PC-9 (cell line): ENCODE measurements at regions of chr3 and their contacts with region 1.

Region 1: DNA sequence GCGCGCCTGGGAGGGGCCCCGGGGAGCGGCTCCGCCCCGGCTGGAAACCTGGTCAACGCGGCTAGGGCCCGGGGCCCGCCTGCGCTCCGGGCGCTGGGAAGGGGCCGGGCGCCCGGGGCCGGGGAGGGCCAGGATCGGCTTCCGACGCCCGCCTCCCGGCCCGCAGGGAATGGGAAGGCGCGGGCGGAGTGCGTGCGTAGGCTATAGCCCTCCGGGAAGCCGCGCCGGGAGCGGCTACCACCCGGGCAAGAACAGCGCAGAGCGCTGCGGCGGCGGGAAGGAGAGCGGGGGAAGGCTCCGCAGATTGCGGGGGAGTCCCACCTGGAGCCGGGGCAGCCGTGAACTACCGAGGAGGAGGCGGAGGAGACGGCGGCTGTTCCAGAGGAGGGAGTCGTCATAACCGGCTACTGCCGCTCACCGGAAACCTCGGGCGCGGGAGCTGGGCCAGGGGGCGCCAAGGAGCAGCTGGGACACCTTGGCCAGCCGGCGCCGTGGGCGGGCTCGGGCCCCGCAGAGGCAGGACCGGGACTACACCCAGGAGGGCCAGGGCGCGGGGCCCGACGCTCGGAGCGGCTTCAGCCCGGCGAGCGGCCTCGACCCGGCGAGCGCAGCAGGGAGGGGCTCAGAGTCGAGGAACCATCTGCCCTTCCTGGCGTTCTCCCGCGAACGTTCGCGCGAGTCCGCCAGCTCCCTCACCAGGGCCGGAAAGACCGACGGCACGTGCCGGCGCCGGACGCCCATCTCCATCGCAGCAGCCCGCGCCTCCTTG is at the start of gene EOGT:
- DNase-seq: peak; percentile 51 to 87
- H3K4me3 ChIP-seq: peak within 1 kb of the TSS; percentile 71
- H3K27ac ChIP-seq: 0 out of 2 replicates have a peak within 1 kb of the TSS, but pooled peaks have one; percentile 26
- H3K4me1 ChIP-seq: peaks cover 11% of the 10 kb centered on the region; the same call in 1 of the 2 replicates
- H3K27me3 ChIP-seq: no peaks in the 10 kb centered on the region
- CTCF ChIP-seq: peak; percentile 54; the same call in 1 of the 2 replicates
- total RNA-seq, gene EOGT: 7.4 and 11.0 TPM in 2 replicates

Region 2: GRCh38 chr3:68751888-68752287 is 261.5 kb before region 1 on chr3:
- CTCF ChIA-PET with region 1: no interaction called
- POLR2A ChIA-PET with region 1: no interaction called
- intact Hi-C with region 1: no loop called
- DNase-seq: no peak
- H3K4me3 ChIP-seq: no peak overlapping the region
- H3K27ac ChIP-seq: no peak overlapping the region
- H3K4me1 ChIP-seq: no peaks in the 10 kb centered on the region
- H3K27me3 ChIP-seq: no peaks in the 10 kb centered on the region
- CTCF ChIP-seq: no peak

Region 3: DNA sequence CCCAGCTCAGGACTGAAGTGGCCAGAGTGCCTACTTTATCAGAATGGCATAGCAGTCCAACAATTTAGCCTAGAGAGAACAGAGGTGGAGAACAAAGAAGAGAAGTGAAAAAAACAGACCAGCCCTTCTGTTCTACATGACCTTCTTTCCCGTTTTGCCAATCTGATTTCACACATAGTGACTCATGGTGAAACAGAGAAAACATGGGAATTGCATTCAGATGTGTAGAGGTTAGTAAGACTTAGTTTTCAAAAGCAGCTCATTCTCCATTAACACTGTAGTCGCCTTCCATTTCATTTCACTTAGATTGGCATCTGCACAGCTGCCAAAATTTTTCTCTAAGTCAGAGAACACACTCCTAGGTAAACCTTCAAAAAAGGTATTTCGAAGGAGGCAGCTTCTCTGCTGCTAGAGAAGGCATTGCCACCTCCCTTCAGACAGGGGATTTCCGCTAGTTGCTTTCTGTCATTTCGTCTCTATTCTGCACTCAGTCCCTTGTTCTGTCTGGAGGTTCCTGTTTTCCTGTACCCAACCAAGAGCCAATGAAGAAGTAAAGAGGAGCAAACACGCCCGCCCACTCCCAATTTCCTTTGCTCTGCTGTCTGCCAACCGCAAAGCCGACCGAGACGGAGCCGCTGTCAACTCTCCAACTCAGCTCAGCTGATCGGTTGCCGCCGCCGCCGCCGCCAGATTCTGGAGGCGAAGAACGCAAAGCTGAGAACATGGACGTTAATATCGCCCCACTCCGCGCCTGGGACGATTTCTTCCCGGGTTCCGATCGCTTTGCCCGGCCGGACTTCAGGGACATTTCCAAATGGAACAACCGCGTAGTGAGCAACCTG is 71.1 kb after region 1 on chr3 and contains the start of gene ARL6IP5:
- CTCF ChIA-PET with region 1: no interaction called
- POLR2A ChIA-PET with region 1: no interaction called
- intact Hi-C with region 1: no loop called
- DNase-seq: peak; percentile 74 to 81
- H3K4me3 ChIP-seq: peak within 1 kb of the TSS; percentile 74
- H3K27ac ChIP-seq: peak within 1 kb of the TSS; percentile 94
- H3K4me1 ChIP-seq: peaks cover 74% of the 10 kb centered on the region
- H3K27me3 ChIP-seq: no peaks in the 10 kb centered on the region
- CTCF ChIP-seq: no peak
- total RNA-seq, gene ARL6IP5: 35.6 and 45.7 TPM in 2 replicates

Region 4: DNA sequence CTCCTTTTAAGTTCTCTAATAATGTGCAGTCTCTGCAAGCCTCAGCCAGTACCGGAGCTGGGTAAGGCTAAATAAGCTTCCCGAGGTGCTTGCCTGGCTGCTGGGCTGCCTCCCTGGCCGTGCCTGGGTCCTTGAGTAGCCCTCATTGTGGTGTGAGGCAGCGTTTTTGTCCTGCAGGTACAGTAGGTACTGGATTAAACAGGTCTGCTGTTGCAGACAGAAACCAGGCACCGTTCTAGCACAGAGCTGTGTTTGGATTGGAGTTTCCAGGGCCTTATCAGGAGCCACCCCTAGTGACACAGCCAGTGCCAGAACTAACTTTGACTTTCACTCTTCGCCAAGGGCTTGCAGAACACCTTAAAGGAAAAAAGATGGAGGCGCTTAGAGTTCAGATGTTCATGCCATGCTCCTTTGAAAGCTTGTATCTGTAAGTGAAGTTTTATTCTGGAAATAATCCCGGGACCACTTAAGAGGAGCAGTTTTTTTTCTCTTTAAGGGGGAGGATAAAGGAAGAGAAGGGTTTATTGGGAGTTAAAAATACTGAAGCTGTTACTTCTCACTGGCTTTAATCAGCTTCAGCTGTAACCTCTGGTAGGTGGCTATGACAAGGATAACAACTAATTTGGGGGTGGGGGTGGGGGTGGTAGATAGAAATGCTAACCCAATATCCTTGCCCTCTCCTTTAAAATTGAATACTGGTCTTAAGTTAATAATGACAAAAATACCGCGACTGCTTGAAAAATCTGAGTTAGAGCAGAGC is 852.7 kb after region 1 on chr3:
- CTCF ChIA-PET with region 1: no interaction called
- POLR2A ChIA-PET with region 1: no interaction called
- intact Hi-C with region 1: loop called (anchors 10 kb)
- DNase-seq: peak in 1 of 2 experiments; percentile 58
- H3K4me3 ChIP-seq: no peak overlapping the region
- H3K27ac ChIP-seq: peak overlapping the region; percentile 83
- H3K4me1 ChIP-seq: peaks cover 51% of the 10 kb centered on the region
- H3K27me3 ChIP-seq: no peaks in the 10 kb centered on the region
- CTCF ChIP-seq: no peak